Heart right ventricle (tissue), 16 donors: ENCODE measurements at regions of chr1 and their contacts with region 1.

Region 1: DNA sequence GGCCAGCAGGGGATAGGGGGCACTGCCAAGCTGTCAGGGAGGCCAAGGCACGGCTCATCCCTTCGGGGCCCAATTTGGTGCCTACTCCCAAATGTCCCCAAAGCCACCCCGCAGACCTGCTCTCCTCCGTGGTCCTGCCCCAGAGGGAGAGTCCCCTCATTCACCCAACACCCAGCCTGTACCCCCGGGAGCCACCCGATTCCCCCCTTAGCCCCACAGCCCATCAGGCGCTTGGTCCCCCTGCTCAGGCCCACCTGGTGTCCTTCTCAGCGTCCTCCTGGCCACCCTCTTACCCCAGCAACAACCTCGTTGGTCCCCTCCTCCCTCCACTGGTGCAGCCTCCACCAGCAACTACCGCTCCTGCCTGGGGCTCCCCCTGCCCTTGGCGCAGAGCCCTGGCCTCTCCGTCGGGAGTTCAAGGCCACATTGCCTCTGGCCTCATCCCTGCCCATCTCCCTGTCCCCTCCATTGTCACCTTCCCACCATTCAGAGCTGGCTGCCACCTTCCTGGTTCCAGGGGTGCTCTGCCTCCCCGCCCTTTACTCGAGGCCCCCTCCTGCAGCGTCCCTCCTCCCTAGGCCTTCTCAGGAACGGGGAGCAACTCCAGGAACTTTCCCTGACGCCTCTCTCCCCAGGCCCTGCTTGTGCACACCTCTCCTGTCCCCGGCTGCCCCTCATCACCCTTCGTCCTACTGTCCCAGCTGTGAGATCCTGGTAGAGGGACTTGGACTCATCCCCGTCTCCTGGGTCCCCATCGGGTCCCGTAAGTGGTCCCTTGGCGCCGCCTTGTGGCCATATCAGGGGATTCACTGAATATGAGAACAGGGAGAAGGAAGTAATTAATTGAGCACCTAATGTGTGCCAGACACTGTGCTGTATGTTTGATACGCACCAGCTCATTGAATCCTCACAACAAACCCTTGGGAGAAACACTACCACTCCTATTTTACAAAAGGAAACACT is 73.9 kb downstream of the RAP1GAP start:
- DNase-seq: peak; percentile 53 to 66
- ATAC-seq: peak in 4 of 8 donors; percentile 45 to 68 (median 52)
- H3K4me3 ChIP-seq: no peak overlapping the region
- H3K27ac ChIP-seq: no peak overlapping the region
- H3K4me1 ChIP-seq: peaks cover 0 to 8% (median 0%) of the 10 kb centered on the region in 9 donors
- H3K27me3 ChIP-seq: peaks cover 0 to 31% (median 11%) of the 10 kb centered on the region in 7 donors
- CTCF ChIP-seq: peak; percentile 40 to 75 (median 61)

Region 2: GRCh38 chr1:21232044-21232443 is 363.2 kb before region 1 on chr1:
- intact Hi-C with region 1: loop called in 1 of 10 experiments (anchors 10 kb)
- DNase-seq: peak in 1 of 2 donors; percentile 58
- ATAC-seq: peak; percentile 51 to 75 (median 67)
- H3K4me3 ChIP-seq: no peak overlapping the region
- H3K27ac ChIP-seq: no peak overlapping the region
- H3K4me1 ChIP-seq: peaks cover 0 to 16% (median 3%) of the 10 kb centered on the region in 9 donors
- H3K27me3 ChIP-seq: no peaks in the 10 kb centered on the region
- CTCF ChIP-seq: peak; percentile 72 to 87 (median 77)

Region 3: GRCh38 chr1:21378705-21379494 is 216.3 kb before region 1 on chr1:
- intact Hi-C with region 1: loop called in 2 of 10 experiments (anchors 5 to 10 kb)
- DNase-seq: no peak
- ATAC-seq: no peak
- H3K4me3 ChIP-seq: no peak overlapping the region
- H3K27ac ChIP-seq: no peak overlapping the region
- H3K4me1 ChIP-seq: no peaks in the 10 kb centered on the region
- H3K27me3 ChIP-seq: peaks cover 0 to 56% (median 11%) of the 10 kb centered on the region in 7 donors
- CTCF ChIP-seq: no peak

Region 4: DNA sequence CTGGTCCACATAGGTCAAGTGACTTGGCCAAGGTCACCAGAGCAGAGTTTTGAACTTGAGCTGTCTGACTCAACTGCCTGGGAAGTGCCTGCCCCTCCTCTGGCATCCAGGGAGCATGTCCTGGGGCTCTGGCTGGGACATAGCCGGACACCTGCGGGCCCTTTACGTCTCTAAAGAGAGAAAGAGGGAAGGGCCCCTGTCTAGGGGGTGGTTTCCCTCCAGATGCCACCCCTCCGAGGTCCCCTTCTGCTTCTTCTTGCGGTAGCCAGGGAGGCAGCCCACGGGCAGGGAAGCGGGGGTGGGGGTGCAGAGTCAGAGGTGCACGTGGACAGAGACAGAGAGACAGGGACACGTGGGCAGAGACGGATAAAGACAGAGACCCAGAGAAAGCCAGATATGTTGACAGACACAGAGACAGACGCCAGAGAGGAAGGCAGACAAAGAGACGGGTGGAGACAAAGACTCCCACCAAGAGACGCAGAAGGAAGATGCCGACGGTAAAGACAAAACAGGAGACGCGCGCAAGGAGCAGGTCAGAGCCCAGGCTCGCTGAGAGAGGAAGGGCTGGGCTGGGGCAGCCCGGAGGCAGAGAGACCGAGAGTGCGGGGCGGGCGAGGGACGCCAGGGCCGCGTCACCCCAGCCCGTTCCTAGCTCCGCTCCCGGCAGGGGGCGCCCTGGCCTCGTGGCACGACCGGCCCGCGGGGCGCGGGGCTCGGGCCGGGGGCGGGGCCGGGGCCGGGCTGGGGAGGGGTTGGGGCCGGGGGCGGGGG is 86.5 kb before region 1 on chr1:
- intact Hi-C with region 1: loop called in 2 of 10 experiments (anchors 1 to 5 kb)
- DNase-seq: peak; percentile 68 to 77
- ATAC-seq: peak; percentile 78 to 89 (median 85)
- H3K4me3 ChIP-seq: peak overlapping the region in 9 of 10 donors; percentile 29 to 60 (median 52)
- H3K27ac ChIP-seq: peak overlapping the region in 3 of 10 donors; percentile 17 to 70 (median 47)
- H3K4me1 ChIP-seq: peaks cover 10 to 43% (median 23%) of the 10 kb centered on the region in 9 donors
- H3K27me3 ChIP-seq: peaks cover 0 to 49% (median 20%) of the 10 kb centered on the region in 7 donors
- CTCF ChIP-seq: peak; percentile 47 to 73 (median 64)

Region 5: DNA sequence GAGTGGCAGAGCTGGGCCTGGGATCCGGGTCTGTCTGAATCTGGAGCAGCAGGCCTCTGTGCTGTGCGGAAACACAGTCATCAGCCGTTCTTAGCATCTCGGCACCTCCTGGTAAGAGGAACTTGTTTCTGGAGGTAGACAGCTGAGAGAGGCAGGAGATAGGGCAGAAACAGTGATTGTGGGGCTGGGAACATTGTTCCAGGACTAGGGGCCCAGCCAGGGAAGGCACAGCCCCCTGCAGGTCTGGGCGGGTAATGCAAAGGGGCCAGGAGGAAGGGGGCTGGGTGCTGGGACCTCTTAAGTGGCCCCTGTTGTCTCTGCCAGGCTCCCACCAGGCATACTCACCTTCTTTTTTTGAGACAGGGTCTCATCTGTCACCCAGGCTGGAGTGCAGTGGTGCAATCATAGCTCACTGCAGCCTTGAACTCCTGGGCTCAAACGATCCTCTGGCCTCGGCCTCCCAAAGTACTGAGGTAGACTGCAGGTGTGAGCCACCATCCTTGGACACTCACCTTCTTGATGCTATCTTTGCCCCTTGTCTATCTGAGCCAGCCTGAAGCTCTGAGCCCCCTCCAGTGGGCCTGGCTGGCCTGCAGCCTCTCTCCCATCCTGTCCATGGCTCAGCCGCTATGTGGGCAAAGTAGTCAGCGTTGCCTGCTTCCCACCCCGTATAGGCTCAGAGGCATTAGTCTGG is 722.2 kb after region 1 on chr1:
- intact Hi-C with region 1: no loop called
- DNase-seq: no peak
- ATAC-seq: no peak
- H3K4me3 ChIP-seq: no peak overlapping the region
- H3K27ac ChIP-seq: no peak overlapping the region
- H3K4me1 ChIP-seq: no peaks in the 10 kb centered on the region
- H3K27me3 ChIP-seq: peaks cover 0 to 60% (median 45%) of the 10 kb centered on the region in 7 donors
- CTCF ChIP-seq: peak in 4 of 9 donors; percentile 14 to 48 (median 22)